ENCODE measurements at regions of chr13 and their contacts with region 1.

Region 1: DNA sequence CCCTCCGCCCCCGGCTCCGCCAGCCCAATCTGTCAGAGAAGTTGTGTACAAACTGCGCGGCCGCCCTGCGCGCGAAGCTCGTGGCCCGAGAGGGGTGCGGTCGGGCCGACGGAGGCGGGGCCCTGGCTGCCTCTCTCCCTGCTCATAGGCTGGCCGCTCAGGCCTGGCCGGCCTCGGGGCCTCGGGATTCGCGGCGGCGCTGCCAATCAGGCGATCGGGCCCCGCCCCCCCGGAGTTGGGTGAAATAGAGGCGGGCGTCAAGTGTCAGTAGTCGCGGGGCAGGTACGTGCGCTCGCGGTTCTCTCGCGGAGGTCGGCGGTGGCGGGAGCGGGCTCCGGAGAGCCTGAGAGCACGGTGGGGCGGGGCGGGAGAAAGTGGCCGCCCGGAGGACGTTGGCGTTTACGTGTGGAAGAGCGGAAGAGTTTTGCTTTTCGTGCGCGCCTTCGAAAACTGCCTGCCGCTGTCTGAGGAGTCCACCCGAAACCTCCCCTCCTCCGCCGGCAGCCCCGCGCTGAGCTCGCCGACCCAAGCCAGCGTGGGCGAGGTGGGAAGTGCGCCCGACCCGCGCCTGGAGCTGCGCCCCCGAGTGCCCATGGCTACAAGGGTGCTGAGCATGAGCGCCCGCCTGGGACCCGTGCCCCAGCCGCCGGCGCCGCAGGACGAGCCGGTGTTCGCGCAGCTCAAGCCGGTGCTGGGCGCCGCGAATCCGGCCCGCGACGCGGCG is at the start of gene KLF5:
- DNase-seq: peak; percentile 99
- H3K4me3 ChIP-seq: peak within 1 kb of the TSS; percentile 61 to 99 (median 86)
- H3K27ac ChIP-seq: peak within 1 kb of the TSS; percentile 99
- H3K4me1 ChIP-seq: peaks cover 43% of the 10 kb centered on the region
- H3K27me3 ChIP-seq: no peaks in the 10 kb centered on the region
- CTCF ChIP-seq: no peak
- total RNA-seq, gene KLF5: 34.3 to 175 TPM

Region 2: GRCh38 chr13:72839831-72840426 is 219.0 kb before region 1 on chr13:
- CTCF ChIA-PET with region 1: interaction called, 16 read pairs
- dilution Hi-C with region 1: no loop called
- in situ Hi-C with region 1: loop called in 1 of 2 experiments (anchors 25 kb)
- intact Hi-C with region 1: loop called (anchors 2 kb)
- DNase-seq: peak; percentile 69
- H3K4me3 ChIP-seq: no peak overlapping the region
- H3K27ac ChIP-seq: peak overlapping the region; percentile 26
- H3K4me1 ChIP-seq: no peaks in the 10 kb centered on the region
- H3K27me3 ChIP-seq: no peaks in the 10 kb centered on the region
- CTCF ChIP-seq: peak; percentile 79 to 86

Region 3: GRCh38 chr13:72970956-72971355 is 87.9 kb before region 1 on chr13:
- CTCF ChIA-PET with region 1: no interaction called
- dilution Hi-C with region 1: no loop called
- in situ Hi-C with region 1: no loop called
- intact Hi-C with region 1: loop called (anchors 5 kb)
- DNase-seq: peak; percentile 14
- H3K4me3 ChIP-seq: no peak overlapping the region
- H3K27ac ChIP-seq: no peak overlapping the region
- H3K4me1 ChIP-seq: no peaks in the 10 kb centered on the region
- H3K27me3 ChIP-seq: no peaks in the 10 kb centered on the region
- CTCF ChIP-seq: no peak

Region 4: GRCh38 chr13:73011751-73012150 is 47.1 kb before region 1 on chr13:
- CTCF ChIA-PET with region 1: no interaction called
- dilution Hi-C with region 1: no loop called
- in situ Hi-C with region 1: no loop called
- intact Hi-C with region 1: no loop called
- DNase-seq: no peak
- H3K4me3 ChIP-seq: no peak overlapping the region
- H3K27ac ChIP-seq: no peak overlapping the region
- H3K4me1 ChIP-seq: no peaks in the 10 kb centered on the region
- H3K27me3 ChIP-seq: no peaks in the 10 kb centered on the region
- CTCF ChIP-seq: no peak

Region 5: DNA sequence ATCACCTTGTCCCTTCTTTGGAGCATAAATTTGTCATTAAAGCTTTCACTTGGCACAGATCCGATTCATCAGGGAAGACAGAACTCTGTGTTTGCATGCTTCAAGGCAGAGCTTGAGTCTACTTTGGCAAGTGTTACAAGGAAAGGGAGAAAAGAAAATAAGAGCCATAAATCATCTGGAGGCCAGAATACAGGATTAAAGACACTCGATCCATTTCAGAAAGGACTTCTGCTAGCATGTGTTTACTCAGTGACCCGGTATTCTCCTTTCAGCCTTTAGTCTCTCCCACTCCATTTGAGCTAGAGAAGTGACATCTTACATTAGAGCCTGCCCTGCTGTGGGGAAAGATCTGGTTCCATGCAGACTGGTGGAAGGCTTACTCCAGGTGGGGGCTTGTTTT is 306.3 kb after region 1 on chr13:
- CTCF ChIA-PET with region 1: no interaction called
- dilution Hi-C with region 1: no loop called
- in situ Hi-C with region 1: no loop called
- intact Hi-C with region 1: no loop called
- DNase-seq: no peak
- H3K4me3 ChIP-seq: no peak overlapping the region
- H3K27ac ChIP-seq: peak overlapping the region; percentile 87
- H3K4me1 ChIP-seq: peaks cover 31% of the 10 kb centered on the region
- H3K27me3 ChIP-seq: no peaks in the 10 kb centered on the region
- CTCF ChIP-seq: no peak

Region 6: DNA sequence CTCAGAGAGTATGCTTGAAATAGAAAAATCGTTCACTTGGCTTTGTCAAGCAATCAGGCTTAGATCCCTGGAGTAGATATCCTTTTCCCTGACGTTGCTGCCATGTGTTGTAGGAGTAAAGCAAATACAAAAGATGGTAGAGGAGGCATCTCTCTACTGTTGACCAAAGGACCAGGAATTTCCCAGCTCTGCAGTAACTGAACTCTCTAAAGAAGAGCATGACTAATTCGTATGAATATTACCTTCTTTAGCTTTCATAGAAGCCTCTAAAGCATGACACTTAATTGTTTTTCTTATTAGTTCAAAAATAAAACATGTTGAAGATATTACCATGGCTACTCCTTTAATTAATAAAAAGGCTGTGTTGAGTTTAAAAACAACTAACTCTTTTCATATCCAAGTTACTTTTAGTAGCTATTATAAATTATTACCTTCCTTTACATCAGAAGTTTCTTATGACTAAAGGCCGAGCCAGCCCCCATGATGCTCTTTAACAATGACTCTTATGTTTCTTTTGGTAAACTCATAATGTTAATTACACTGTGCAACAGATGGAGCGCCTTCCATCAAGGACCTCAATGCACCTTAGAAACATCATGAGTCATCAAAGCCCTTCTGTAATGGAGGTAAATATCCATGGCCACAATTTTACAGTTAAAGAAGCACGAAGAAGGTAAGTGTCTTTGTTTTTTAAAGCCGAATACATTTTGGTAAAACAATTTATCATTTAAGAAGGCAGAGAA is 352.3 kb after region 1 on chr13:
- CTCF ChIA-PET with region 1: no interaction called
- dilution Hi-C with region 1: no loop called
- in situ Hi-C with region 1: loop called in 1 of 2 experiments (anchors 10 kb)
- intact Hi-C with region 1: loop called (anchors 2 kb)
- DNase-seq: peak; percentile 90
- H3K4me3 ChIP-seq: no peak overlapping the region
- H3K27ac ChIP-seq: peak overlapping the region; percentile 85
- H3K4me1 ChIP-seq: peaks cover 33% of the 10 kb centered on the region
- H3K27me3 ChIP-seq: no peaks in the 10 kb centered on the region
- CTCF ChIP-seq: no peak

Region 7: DNA sequence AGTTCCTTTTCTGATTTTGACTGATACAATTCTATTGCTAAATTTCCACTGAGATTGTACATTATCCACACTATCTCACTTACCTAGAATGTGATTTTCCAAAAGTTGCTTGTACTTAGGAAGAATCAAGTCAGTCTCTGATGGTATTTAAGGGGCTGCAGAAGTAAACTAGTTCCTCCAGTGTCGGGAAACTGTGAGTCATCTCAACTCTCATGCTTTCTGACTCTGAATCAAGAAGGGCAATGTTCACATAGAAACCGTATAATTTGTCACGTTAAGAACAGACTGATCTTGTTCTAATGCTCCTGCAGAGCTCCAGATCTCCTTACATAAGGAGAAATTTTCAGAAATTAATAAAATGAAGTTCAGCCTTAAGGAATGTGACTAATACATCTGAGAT is 369.2 kb after region 1 on chr13:
- CTCF ChIA-PET with region 1: no interaction called
- dilution Hi-C with region 1: no loop called
- in situ Hi-C with region 1: loop called in 1 of 2 experiments (anchors 10 kb)
- intact Hi-C with region 1: no loop called
- DNase-seq: peak; percentile 96
- H3K4me3 ChIP-seq: no peak overlapping the region
- H3K27ac ChIP-seq: peak overlapping the region; percentile 98
- H3K4me1 ChIP-seq: peaks cover 31% of the 10 kb centered on the region
- H3K27me3 ChIP-seq: no peaks in the 10 kb centered on the region
- CTCF ChIP-seq: no peak

Region 8: GRCh38 chr13:73465617-73465971 is 406.7 kb after region 1 on chr13:
- CTCF ChIA-PET with region 1: no interaction called
- dilution Hi-C with region 1: no loop called
- in situ Hi-C with region 1: no loop called
- intact Hi-C with region 1: loop called (anchors 2 kb)
- DNase-seq: peak; percentile 96
- H3K4me3 ChIP-seq: no peak overlapping the region
- H3K27ac ChIP-seq: peak overlapping the region; percentile 94
- H3K4me1 ChIP-seq: peaks cover 31% of the 10 kb centered on the region
- H3K27me3 ChIP-seq: no peaks in the 10 kb centered on the region
- CTCF ChIP-seq: peak; percentile 11 to 34